Activated CD4-positive, alpha-beta memory T cell treated with anti-CD3 and anti-CD28 coated beads, Interleukin-2, amount 10 ng/mL, durations not matched to agents 7 days and 5 days (primary cell): ENCODE measurements at regions of chr22 and their contacts with region 1.

Region 1: DNA sequence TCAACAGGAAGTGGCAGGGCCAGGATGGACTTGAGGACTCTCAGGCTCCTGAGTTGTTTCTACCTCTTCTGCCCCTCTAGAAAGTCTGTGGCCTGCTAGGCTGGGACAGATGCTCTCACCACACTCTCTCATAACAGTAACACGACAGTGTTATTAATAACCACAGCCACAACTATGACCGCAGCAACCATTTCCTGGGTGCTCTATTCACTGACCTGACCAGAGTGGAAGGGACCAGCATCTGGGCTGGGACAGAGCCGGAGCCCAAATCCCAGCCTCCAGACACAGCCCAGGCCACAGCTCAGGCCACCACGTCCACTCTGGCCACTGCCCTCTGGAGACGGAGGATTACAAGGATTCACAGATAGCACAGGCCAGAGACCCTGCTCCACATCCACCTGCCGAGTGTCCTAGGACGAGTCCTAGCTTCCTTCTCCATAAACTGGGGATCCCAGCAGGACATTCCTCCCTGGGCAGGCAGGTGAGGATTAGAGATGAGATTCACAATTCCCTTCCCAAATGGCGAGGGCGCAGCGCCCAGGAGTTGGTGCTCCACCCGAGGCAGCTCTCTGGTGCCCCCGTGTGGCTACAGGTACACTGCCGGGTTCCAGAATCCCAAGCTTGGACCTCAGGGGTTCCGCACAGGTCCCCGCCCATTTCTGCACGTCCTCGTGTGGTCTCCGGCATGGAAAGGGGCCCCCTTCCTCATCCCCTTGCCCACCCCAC is 7.0 kb downstream of the PNPLA5 start:
- DNase-seq: peak; percentile 50
- H3K4me3 Mint-ChIP-seq: no peak overlapping the region
- H3K27ac Mint-ChIP-seq: no peak overlapping the region
- H3K4me1 Mint-ChIP-seq: no peaks in the 10 kb centered on the region
- H3K27me3 Mint-ChIP-seq: peaks cover 17% of the 10 kb centered on the region

Region 2: GRCh38 chr22:43860831-43861230 is 23.9 kb before region 1 on chr22:
- CTCF ChIA-PET with region 1: no interaction called
- POLR2A ChIA-PET with region 1: no interaction called
- DNase-seq: no peak
- H3K4me3 Mint-ChIP-seq: no peak overlapping the region
- H3K27ac Mint-ChIP-seq: no peak overlapping the region
- H3K4me1 Mint-ChIP-seq: peaks cover 2% of the 10 kb centered on the region
- H3K27me3 Mint-ChIP-seq: peaks cover 39% of the 10 kb centered on the region

Region 3: DNA sequence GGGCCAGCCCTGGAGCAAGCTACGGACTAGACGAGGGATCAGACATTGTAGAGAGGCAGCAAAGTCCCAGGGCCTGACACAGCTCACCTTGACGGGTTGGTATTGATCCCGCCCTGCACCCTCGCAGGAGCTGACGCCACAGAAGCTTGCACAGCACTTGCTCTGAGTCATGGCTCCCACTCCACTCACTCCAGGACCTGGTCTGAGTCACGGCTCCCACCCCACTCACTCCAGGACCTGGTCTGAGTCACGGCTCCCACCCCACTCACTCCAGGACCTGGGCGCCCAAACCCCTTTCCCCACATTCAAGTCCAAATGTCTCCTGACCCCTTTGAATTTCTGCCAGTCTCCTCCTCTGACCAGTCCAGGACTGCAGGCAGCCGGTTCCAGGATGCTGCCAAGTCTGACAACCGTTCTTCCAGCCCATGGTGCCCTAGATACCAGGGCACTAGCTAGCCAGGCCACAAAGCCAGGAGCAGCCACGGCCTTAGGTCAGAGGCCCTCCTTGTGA is 13.0 kb after region 1 on chr22:
- CTCF ChIA-PET with region 1: interaction called, 15 read pairs
- POLR2A ChIA-PET with region 1: no interaction called
- DNase-seq: no peak
- H3K4me3 Mint-ChIP-seq: no peak overlapping the region
- H3K27ac Mint-ChIP-seq: no peak overlapping the region
- H3K4me1 Mint-ChIP-seq: no peaks in the 10 kb centered on the region
- H3K27me3 Mint-ChIP-seq: peaks cover 7% of the 10 kb centered on the region

Region 4: GRCh38 chr22:43945632-43946383 is 61.0 kb after region 1 on chr22:
- CTCF ChIA-PET with region 1: interaction called, 24 read pairs
- POLR2A ChIA-PET with region 1: interaction called, 3 read pairs
- DNase-seq: peak; percentile 75
- H3K4me3 Mint-ChIP-seq: no peak overlapping the region
- H3K27ac Mint-ChIP-seq: no peak overlapping the region
- H3K4me1 Mint-ChIP-seq: no peaks in the 10 kb centered on the region
- H3K27me3 Mint-ChIP-seq: peaks cover 3% of the 10 kb centered on the region

Region 5: GRCh38 chr22:44026630-44027511 is 142.1 kb after region 1 on chr22:
- CTCF ChIA-PET with region 1: no interaction called
- POLR2A ChIA-PET with region 1: no interaction called
- DNase-seq: peak; percentile 82
- H3K4me3 Mint-ChIP-seq: peak overlapping the region; percentile 74
- H3K27ac Mint-ChIP-seq: peak overlapping the region; percentile 92
- H3K4me1 Mint-ChIP-seq: peaks cover 62% of the 10 kb centered on the region
- H3K27me3 Mint-ChIP-seq: no peaks in the 10 kb centered on the region